ENCODE measurements at regions of chr22 and their contacts with region 1.

Region 1: DNA sequence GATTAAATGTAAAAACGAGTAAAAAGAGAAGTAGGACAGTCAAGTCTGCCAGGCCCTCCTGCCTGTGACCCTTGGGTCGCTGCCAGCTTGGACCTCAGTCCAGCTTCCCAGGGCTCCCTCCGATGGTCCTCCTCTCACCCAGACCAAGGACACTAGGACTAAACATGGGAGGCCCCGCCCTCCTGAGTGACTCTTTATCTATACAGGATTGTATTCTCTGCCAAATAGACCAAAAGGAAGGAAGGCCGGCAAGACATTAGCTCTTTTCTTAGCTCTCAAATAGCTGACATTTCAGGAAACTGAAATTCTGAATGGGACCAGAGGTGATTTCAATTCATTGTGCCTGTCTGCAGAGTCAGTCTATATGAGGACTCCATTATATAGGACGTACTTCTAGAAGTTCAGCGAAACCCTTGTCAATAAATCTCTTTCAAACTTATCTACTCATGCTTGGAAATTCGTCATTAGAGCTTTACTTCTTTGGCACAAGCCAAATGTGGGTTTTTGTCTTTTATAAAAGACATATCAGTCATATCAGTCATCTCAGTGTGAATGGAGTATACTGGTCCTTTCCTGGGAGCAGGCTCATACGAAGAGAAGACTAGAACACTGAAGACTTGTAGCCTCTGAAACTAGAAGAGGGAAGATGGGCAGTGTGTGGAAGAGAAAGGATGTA is 28.5 kb downstream of the ADORA2A start:
- DNase-seq: peak; percentile 80

Region 2: DNA sequence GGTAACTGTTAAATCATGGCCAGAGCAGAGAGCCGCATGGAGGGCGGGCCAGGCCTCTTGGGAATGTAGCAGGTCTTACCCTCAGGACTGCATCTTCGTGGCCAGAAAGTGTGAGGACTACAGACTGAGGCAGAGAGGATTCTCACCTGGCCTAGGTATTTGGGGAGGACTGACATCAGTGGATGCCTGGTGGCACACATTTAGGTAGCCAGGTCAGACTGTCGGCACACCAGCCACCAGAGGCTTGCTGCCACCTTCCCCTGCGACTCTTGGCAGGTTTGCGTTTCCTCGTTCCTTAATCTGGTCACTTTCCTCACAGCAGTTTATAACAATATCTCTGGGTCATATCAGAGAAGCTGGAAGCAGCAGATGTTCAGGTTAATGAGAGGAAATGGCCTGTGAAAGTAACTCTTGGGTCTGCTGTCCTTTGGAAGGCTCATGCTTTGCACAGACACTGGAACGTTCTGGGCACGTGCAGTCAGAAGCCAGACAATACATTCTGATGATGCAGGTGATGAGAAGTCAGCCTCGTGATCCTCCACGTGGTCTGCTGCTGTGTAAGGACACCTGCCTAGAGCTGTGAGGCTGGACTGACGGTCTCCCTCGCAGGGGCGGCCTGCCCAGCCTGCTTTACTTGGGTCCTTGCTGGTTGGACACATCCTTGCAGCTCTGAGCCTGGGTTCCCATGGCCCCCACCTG is 47.4 kb before region 1 on chr22:
- intact Hi-C with region 1: loop called in 1 of 2 experiments (anchors 2 kb)
- DNase-seq: no peak